PC-3 (cell line): ENCODE measurements at regions of chr21 and their contacts with region 1.

Region 1: GRCh38 chr21:46323227-46324128 is at the start of gene C21orf58:
- DNase-seq: peak; percentile 99
- ATAC-seq: peak; percentile 72
- H3K4me3 ChIP-seq: peak within 1 kb of the TSS; percentile 97
- H3K27ac ChIP-seq: peak within 1 kb of the TSS; percentile 98
- H3K4me1 ChIP-seq: peaks cover 28% of the 10 kb centered on the region
- H3K27me3 ChIP-seq: no peaks in the 10 kb centered on the region
- CTCF ChIP-seq: no peak
- total RNA-seq, gene C21orf58: 14.6 and 15.3 TPM in 2 replicates

Region 2: DNA sequence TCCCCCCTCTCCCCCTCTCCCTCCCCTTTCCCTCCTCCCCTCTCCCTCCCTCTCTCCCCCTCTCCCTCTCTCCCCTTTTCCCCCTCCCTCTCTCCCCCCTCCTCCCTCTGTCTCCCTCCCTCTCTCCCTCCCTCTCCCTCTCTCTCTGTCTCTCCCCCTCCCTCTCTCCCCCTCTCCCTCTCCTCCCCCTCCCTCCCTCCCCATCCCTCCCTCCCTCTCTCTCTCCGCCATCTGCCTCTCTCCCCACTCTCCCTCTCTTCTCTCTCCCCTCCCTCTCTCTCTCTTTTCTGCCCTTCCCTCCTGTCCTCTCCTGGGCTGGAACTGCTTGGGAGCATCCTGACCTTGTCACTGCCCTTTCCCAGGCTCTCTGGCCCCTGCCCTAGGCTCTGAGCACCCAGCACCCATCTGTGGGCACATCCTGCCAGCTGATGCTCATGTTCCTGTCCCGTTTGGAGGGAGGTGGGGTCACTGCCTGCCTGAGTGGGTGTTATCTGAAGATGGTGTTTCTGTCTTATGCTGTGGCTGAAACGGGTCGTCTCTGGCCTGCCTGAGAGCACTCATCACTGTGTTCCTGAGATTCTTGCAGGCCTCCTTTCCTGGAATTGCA is 178.9 kb before region 1 on chr21:
- CTCF ChIA-PET with region 1: interaction called, 3 read pairs
- POLR2A ChIA-PET with region 1: interaction called, 4 read pairs
- intact Hi-C with region 1: loop called (anchors 5 kb)
- DNase-seq: no peak
- ATAC-seq: no peak
- H3K4me3 ChIP-seq: no peak overlapping the region
- H3K27ac ChIP-seq: no peak overlapping the region
- H3K4me1 ChIP-seq: peaks cover 5% of the 10 kb centered on the region; the same call in 1 of the 2 replicates
- H3K27me3 ChIP-seq: no peaks in the 10 kb centered on the region
- CTCF ChIP-seq: no peak

Region 3: GRCh38 chr21:46228345-46229051 is 95.0 kb before region 1 on chr21 and contains the start of gene LSS:
- CTCF ChIA-PET with region 1: interaction called, 3 read pairs
- POLR2A ChIA-PET with region 1: no interaction called
- intact Hi-C with region 1: loop called (anchors 5 kb)
- DNase-seq: peak; percentile 98
- ATAC-seq: peak; percentile 93
- H3K4me3 ChIP-seq: peak within 1 kb of the TSS; percentile 86
- H3K27ac ChIP-seq: peak within 1 kb of the TSS; percentile 33
- H3K4me1 ChIP-seq: peaks cover 32% of the 10 kb centered on the region
- H3K27me3 ChIP-seq: no peaks in the 10 kb centered on the region
- CTCF ChIP-seq: no peak
- total RNA-seq, gene LSS: 45.7 and 53.9 TPM in 2 replicates

Region 4: DNA sequence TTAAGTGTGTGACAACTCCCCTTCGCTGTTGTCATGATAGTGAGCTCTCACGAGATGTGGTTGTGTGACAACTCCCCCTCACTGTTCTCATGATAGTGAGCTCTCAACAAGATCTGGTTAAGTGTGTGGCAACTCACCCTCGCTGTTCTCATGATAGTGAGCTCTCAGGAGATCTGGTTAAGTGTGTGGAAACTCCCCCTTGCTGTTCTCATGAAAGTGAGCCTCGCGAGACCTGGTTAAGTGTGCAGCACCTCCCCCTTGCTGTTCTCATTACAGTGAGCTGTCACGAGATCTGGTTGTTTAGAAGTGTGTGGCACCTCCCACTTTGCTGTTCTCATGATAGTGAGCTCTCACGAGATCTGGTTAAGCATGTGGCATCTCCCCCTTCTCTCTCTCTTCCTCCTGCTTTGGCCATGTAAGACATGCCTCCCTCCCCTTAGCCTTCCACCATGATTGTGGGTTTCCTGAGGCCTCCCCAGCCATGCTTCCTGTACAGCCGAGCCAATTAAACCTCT is 69.8 kb before region 1 on chr21:
- CTCF ChIA-PET with region 1: no interaction called
- POLR2A ChIA-PET with region 1: interaction called, 10 read pairs
- intact Hi-C with region 1: no loop called
- DNase-seq: no peak
- ATAC-seq: no peak
- H3K4me3 ChIP-seq: no peak overlapping the region
- H3K27ac ChIP-seq: no peak overlapping the region
- H3K4me1 ChIP-seq: no peaks in the 10 kb centered on the region
- H3K27me3 ChIP-seq: no peaks in the 10 kb centered on the region
- CTCF ChIP-seq: no peak

Region 5: DNA sequence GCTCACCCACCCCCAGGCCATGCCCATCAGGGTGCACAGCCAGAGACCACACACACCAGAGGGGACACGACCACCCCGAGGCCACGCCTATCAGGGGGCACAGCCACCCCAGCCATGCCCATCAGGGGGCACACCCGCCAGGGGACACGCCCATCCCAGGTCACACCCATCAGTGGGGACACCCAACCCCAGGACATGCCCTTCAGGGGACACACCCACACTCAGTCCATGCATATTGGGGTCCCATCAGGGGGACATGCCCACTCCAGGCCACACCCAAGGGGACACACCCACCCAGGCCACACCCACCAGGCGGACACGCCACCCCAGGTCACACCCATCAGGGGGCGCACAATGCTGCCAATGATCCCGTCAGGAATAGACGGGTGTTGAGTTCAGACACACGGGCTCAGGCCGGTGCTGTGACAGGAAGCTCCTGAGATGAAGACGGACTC is 58.8 kb before region 1 on chr21:
- CTCF ChIA-PET with region 1: interaction called, 5 read pairs
- POLR2A ChIA-PET with region 1: no interaction called
- intact Hi-C with region 1: loop called (anchors 10 kb)
- DNase-seq: no peak
- ATAC-seq: no peak
- H3K4me3 ChIP-seq: no peak overlapping the region
- H3K27ac ChIP-seq: no peak overlapping the region
- H3K4me1 ChIP-seq: peaks cover 7% of the 10 kb centered on the region
- H3K27me3 ChIP-seq: no peaks in the 10 kb centered on the region
- CTCF ChIP-seq: no peak

Region 6: DNA sequence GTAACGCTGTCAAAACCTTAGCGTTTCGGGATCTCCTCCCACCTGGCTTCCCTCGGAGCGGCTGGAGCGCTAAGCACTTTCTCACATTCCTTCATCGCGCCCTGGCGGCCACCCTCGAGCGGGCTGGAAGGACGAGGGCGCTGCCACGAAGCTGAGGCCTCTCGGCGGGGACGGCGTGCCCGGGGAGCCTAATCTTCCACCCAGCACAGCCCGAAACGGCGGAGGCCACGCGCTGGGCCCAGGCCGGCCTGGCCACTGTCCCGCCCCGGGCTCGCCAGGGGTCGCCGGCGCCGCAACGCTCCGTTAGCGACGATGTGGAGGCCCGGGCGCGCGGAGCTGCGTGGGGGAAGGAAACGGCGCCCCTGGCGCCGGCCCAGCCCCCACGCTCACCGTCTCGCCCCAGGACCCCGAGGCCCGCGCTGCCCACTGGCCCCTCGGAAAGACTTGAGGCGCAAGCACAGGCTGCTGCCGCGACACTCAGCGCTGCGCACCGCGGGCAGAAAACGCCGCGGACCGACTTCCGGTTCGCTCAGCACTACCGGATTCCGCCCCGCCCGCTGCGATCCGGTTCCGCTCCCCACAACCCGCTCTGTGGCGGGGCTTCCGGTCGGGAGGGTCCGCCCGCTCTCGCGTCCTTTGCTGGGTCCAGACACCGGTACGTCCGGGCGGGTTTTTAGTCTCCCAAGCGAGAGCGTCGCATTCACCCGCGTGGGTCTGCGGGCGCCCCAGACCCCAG is 37.5 kb before region 1 on chr21 and contains the start of gene YBEY:
- CTCF ChIA-PET with region 1: interaction called, 3 read pairs
- POLR2A ChIA-PET with region 1: no interaction called
- intact Hi-C with region 1: loop called (anchors 1 kb)
- DNase-seq: peak; percentile 92
- ATAC-seq: peak; percentile 90
- H3K4me3 ChIP-seq: peak within 1 kb of the TSS; percentile 75
- H3K27ac ChIP-seq: peak within 1 kb of the TSS; percentile 84
- H3K4me1 ChIP-seq: peaks cover 30% of the 10 kb centered on the region
- H3K27me3 ChIP-seq: no peaks in the 10 kb centered on the region
- CTCF ChIP-seq: peak; percentile 46; the same call in 1 of the 2 replicates
- total RNA-seq, gene YBEY: 38.2 and 39.0 TPM in 2 replicates